Right ventricle myocardium inferior (tissue), 1 donor: ENCODE measurements at regions of chr17 and their contacts with region 1.

Region 1: GRCh38 chr17:14935139-14935841 is 329.8 kb downstream of the PMP22 start:
- DNase-seq: no peak
- ATAC-seq: no peak

Region 2: DNA sequence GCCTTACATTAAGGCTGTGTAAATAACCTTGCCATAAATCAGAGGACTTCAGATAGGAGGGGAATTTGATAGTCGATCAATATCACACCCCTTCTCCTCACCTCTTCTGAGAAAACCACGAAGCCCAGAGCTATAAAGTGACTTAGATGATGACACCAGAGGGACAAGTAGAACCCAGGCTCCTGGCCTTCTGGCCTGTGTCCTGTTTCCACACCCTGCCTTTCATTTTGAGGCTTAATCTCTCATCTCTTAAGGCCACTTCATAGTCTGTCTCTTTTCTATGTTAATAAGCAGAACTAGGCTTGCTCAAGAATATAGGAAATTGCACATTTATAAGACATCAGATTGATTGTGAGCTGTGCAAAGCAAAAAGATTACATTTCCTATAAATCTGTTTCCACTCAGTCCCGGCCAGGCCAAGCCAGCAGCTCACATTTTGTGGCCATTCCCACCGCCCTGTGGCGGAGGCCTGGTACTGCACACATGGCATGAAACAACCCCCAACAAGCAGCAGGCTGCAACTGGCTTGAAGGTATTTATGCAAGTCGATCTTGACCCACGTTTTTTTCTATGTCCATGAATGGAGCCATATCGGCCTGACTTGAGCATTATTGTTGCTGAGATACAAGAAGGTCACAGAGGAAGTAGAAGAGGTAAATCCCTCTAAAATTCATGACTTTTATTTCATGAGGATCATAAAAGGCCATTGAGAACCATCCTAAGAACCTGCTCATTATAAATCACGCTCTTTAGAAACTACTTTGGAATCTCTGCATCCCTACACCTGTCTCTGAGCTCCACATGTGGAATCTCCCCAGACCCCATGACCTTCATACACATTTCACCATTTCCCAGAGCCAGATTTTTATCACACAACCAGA is 236.1 kb after region 1 on chr17:
- intact Hi-C with region 1: loop called (anchors 5 kb)
- DNase-seq: peak; percentile 77
- ATAC-seq: peak; percentile 82